ENCODE measurements at regions of chr2 and their contacts with region 1.

Region 1: DNA sequence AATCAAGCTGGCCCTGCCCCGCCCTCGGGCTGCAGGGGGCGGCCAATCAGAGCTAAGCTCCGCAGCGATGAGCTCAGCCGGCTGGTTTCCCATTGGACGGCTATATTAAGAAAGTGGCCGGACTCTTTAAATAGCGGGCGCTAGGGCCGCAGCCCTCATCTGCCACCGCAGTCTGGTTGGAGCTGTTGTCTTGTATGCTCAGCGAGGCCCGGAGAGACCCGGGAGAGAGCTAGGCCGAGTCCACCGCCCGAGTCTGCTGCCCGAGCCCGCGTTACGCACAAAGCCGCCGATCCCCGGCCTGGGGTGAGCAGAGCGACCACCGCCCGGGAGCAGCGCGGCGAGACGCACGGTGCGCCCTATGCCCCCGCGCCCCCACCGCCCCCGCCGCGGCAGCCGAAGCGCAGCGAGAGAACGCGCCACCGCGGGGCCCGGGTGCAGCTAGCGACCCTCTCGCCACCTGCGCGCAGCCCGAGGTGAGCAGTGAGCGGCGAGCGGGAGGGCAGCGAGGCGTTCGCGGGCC is at the start of gene RHOB:
- DNase-seq: peak; percentile 99
- ATAC-seq: peak; percentile 88
- H3K4me3 ChIP-seq: peak within 1 kb of the TSS; percentile 84
- H3K27ac ChIP-seq: 0 out of 2 replicates have a peak within 1 kb of the TSS, but pooled peaks have one; percentile 8
- H3K4me1 ChIP-seq: peaks cover 35% of the 10 kb centered on the region
- H3K27me3 ChIP-seq: no peaks in the 10 kb centered on the region
- CTCF ChIP-seq: no peak
- total RNA-seq, gene RHOB: 88.5 and 108 TPM in 2 replicates

Region 2: GRCh38 chr2:18719978-18720775 is 1726.8 kb before region 1 on chr2:
- CTCF ChIA-PET with region 1: no interaction called
- POLR2A ChIA-PET with region 1: interaction called, 21 read pairs
- intact Hi-C with region 1: no loop called
- DNase-seq: peak; percentile 82
- ATAC-seq: peak; percentile 88
- H3K4me3 ChIP-seq: no peak overlapping the region
- H3K27ac ChIP-seq: no peak overlapping the region
- H3K4me1 ChIP-seq: peaks cover 26% of the 10 kb centered on the region
- H3K27me3 ChIP-seq: no peaks in the 10 kb centered on the region
- CTCF ChIP-seq: no peak

Region 3: GRCh38 chr2:20225294-20226151 is 221.5 kb before region 1 on chr2:
- CTCF ChIA-PET with region 1: no interaction called
- POLR2A ChIA-PET with region 1: no interaction called
- intact Hi-C with region 1: no loop called
- DNase-seq: peak; percentile 78
- ATAC-seq: peak; percentile 70
- H3K4me3 ChIP-seq: peak overlapping the region; percentile 78
- H3K27ac ChIP-seq: peak overlapping the region; percentile 73
- H3K4me1 ChIP-seq: peaks cover 36% of the 10 kb centered on the region
- H3K27me3 ChIP-seq: no peaks in the 10 kb centered on the region
- CTCF ChIP-seq: peak; percentile 72

Region 4: GRCh38 chr2:20398956-20399567 is 47.9 kb before region 1 on chr2:
- CTCF ChIA-PET with region 1: interaction called, 5 read pairs
- POLR2A ChIA-PET with region 1: no interaction called
- intact Hi-C with region 1: loop called (anchors 5 kb)
- DNase-seq: peak; percentile 55
- ATAC-seq: no peak
- H3K4me3 ChIP-seq: no peak overlapping the region
- H3K27ac ChIP-seq: no peak overlapping the region
- H3K4me1 ChIP-seq: peaks cover 9% of the 10 kb centered on the region
- H3K27me3 ChIP-seq: no peaks in the 10 kb centered on the region
- CTCF ChIP-seq: no peak

Region 5: GRCh38 chr2:20570249-20570648 is 123.3 kb after region 1 on chr2:
- CTCF ChIA-PET with region 1: interaction called, 11 read pairs
- POLR2A ChIA-PET with region 1: no interaction called
- intact Hi-C with region 1: no loop called
- DNase-seq: no peak
- ATAC-seq: no peak
- H3K4me3 ChIP-seq: no peak overlapping the region
- H3K27ac ChIP-seq: no peak overlapping the region
- H3K4me1 ChIP-seq: peaks cover 18% of the 10 kb centered on the region
- H3K27me3 ChIP-seq: no peaks in the 10 kb centered on the region
- CTCF ChIP-seq: no peak

Region 6: DNA sequence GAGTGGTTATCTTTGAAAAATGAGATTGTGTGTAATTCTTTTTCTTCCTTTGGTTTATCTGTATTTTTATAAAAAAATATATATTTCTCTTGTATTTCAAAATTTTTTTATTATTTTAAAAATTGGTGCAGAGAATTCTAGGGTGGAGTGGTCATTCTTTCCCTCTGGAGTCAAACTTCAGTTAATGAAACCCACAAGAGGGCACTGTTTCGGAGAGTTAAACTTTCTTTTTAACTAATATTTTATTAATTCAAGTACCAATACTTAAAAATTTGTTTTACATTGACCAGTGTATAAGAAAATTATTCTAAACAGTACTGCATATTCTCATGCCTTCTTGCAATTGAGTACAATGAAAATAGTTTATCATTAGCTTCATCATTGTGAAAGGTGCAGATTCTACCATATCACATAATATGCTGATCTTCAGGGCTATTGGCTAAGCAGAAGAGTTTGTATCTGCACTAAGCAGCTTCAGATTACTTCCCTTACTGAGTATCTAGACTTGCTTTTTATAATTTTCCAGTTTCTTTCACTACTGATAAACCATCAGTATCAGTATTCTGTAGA is 153.9 kb after region 1 on chr2:
- CTCF ChIA-PET with region 1: interaction called, 11 read pairs
- POLR2A ChIA-PET with region 1: interaction called, 7 read pairs
- intact Hi-C with region 1: no loop called
- DNase-seq: peak; percentile 44
- ATAC-seq: no peak
- H3K4me3 ChIP-seq: no peak overlapping the region
- H3K27ac ChIP-seq: no peak overlapping the region
- H3K4me1 ChIP-seq: peaks cover 13% of the 10 kb centered on the region
- H3K27me3 ChIP-seq: no peaks in the 10 kb centered on the region
- CTCF ChIP-seq: peak; percentile 46

Region 7: GRCh38 chr2:20635675-20636584 is 189.0 kb after region 1 on chr2:
- CTCF ChIA-PET with region 1: interaction called, 17 read pairs
- POLR2A ChIA-PET with region 1: interaction called, 9 read pairs
- intact Hi-C with region 1: loop called (anchors 1 kb)
- DNase-seq: peak; percentile 83
- ATAC-seq: peak; percentile 98
- H3K4me3 ChIP-seq: no peak overlapping the region
- H3K27ac ChIP-seq: no peak overlapping the region
- H3K4me1 ChIP-seq: peaks cover 19% of the 10 kb centered on the region
- H3K27me3 ChIP-seq: no peaks in the 10 kb centered on the region
- CTCF ChIP-seq: peak; percentile 95

Region 8: GRCh38 chr2:20650880-20651730 is 204.1 kb after region 1 on chr2 and contains the start of gene HS1BP3:
- CTCF ChIA-PET with region 1: interaction called, 10 read pairs
- POLR2A ChIA-PET with region 1: interaction called, 4 read pairs
- intact Hi-C with region 1: no loop called
- DNase-seq: peak; percentile 91
- ATAC-seq: peak; percentile 95
- H3K4me3 ChIP-seq: peak within 1 kb of the TSS; percentile 74
- H3K27ac ChIP-seq: peak within 1 kb of the TSS; percentile 24
- H3K4me1 ChIP-seq: peaks cover 15% of the 10 kb centered on the region
- H3K27me3 ChIP-seq: peaks cover 6% of the 10 kb centered on the region; the same call in 1 of the 2 replicates
- CTCF ChIP-seq: peak; percentile 67
- total RNA-seq, gene HS1BP3: 17.8 and 19.6 TPM in 2 replicates